ENCODE measurements at regions of chr2 and their contacts with region 1.

Region 1: DNA sequence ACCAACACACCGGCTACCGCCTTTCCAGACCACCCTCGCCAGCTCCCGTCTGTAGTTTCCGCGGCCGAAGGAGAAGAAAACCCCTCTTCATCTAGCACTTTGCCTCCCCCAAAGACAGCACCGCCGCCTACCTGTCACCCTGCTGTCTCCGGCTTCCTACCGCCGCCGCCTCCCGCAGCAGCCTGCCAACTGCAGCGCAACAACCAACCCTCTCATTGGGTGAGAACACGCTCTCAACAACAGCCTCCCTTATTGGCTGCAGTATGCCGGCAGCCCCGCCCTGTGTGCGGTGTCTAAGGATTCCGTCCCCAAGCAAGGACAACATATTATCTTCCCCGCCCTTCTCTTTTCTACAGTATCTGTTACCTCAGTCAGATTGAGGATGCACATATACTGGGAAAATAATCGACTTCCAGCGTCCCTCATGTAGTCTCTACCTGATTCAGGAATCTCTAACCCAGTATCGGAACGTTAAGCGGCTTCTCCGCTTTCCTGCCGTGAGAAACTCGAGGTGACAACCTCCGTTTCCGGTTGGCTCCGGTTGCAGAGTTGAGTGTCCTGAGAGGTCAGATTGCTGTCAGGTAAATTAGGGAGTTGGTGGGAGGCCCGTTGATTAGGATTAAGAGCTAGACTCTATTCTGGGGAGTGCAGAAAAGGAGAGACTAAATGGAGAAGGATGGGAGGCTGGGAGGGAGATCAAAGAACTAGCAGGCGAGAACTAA is at the starts of genes HYCC2 and NDUFB3:
- DNase-seq: peak; percentile 98
- ATAC-seq: peak; percentile 97
- H3K4me3 ChIP-seq: peak within 1 kb of the TSS; percentile 61 to 92 (median 86)
- H3K4me3 Mint-ChIP-seq: peak within 1 kb of the TSS; percentile 91
- H3K27ac ChIP-seq: peak within 1 kb of the TSS; percentile 58 to 91
- H3K27ac Mint-ChIP-seq: peak within 1 kb of the TSS; percentile 98
- H3K4me1 ChIP-seq: peaks cover 18 to 27% of the 10 kb centered on the region in 2 donors
- H3K4me1 Mint-ChIP-seq: peaks cover 39% of the 10 kb centered on the region
- H3K27me3 ChIP-seq: no peaks in the 10 kb centered on the region
- H3K27me3 Mint-ChIP-seq: no peaks in the 10 kb centered on the region
- CTCF ChIP-seq: peak; percentile 40
- total RNA-seq, gene HYCC2: 30.1 and 32.4 TPM in 2 replicates
- total RNA-seq, gene NDUFB3: 35.1 and 44.7 TPM in 2 replicates

Region 2: DNA sequence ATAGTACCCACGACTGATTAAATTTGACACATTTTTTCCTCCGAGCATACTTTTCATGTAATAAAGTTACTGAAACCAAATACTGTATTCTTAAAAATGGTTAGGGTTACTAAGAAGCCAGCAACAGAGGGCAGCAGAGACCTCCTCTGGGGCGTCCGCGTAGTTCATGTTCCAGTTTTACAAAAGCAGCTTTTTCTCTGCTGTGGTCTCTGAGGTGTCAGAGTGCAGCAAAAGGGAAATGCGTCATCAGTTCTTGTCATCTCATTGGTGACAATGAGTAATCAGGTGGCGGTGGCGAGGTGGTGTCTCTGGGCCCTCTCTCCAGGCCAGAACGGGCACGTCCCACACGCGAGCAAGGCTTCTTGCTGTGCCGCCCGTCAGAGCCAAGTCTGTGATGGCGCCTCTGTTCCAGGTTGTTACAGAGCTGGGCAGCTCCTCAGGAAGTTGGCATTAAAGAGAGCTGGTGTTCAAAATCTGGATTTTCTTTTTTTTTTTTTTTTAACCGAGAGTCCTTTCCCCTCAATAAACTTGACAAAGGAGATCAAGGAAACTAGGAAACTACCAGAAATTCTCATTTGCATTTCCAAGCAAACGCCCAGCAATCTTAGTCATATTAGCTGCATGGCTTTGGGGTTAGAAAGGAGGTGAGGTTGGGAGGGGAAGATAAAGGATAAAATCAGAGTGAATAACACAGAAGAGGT is 358.5 kb before region 1 on chr2:
- CTCF ChIA-PET with region 1: interaction called, 22 read pairs
- POLR2A ChIA-PET with region 1: no interaction called
- intact Hi-C with region 1: no loop called
- DNase-seq: peak; percentile 91
- ATAC-seq: peak; percentile 99
- H3K4me3 ChIP-seq: peak overlapping the region in 4 of 5 experiments; percentile 5 to 52 (median 16)
- H3K4me3 Mint-ChIP-seq: peak overlapping the region; percentile 83
- H3K27ac ChIP-seq: peak overlapping the region; percentile 82 to 93
- H3K27ac Mint-ChIP-seq: peak overlapping the region; percentile 98
- H3K4me1 ChIP-seq: peaks cover 5 to 6% of the 10 kb centered on the region in 2 donors
- H3K4me1 Mint-ChIP-seq: peaks cover 15% of the 10 kb centered on the region
- H3K27me3 ChIP-seq: no peaks in the 10 kb centered on the region
- H3K27me3 Mint-ChIP-seq: peaks cover 10% of the 10 kb centered on the region
- CTCF ChIP-seq: peak; percentile 83

Region 3: GRCh38 chr2:200888704-200889625 is 182.7 kb before region 1 on chr2 and contains the starts of genes NIF3L1 and PPIL3:
- CTCF ChIA-PET with region 1: interaction called, 11 read pairs
- POLR2A ChIA-PET with region 1: interaction called, 4 read pairs
- intact Hi-C with region 1: loop called (anchors 1 kb)
- DNase-seq: peak; percentile 98
- ATAC-seq: peak; percentile 81
- H3K4me3 ChIP-seq: peak within 1 kb of the TSS; percentile 76 to 99 (median 87)
- H3K4me3 Mint-ChIP-seq: peak within 1 kb of the TSS; percentile 95
- H3K27ac ChIP-seq: peak within 1 kb of the TSS; percentile 90 to 93
- H3K27ac Mint-ChIP-seq: peak within 1 kb of the TSS; percentile 98
- H3K4me1 ChIP-seq: peaks cover 15 to 28% of the 10 kb centered on the region in 2 donors
- H3K4me1 Mint-ChIP-seq: peaks cover 43% of the 10 kb centered on the region
- H3K27me3 ChIP-seq: no peaks in the 10 kb centered on the region
- H3K27me3 Mint-ChIP-seq: no peaks in the 10 kb centered on the region
- CTCF ChIP-seq: no peak
- total RNA-seq, gene NIF3L1: 26.7 and 32.9 TPM in 2 replicates
- total RNA-seq, gene PPIL3: 55.5 and 57.9 TPM in 2 replicates

Region 4: DNA sequence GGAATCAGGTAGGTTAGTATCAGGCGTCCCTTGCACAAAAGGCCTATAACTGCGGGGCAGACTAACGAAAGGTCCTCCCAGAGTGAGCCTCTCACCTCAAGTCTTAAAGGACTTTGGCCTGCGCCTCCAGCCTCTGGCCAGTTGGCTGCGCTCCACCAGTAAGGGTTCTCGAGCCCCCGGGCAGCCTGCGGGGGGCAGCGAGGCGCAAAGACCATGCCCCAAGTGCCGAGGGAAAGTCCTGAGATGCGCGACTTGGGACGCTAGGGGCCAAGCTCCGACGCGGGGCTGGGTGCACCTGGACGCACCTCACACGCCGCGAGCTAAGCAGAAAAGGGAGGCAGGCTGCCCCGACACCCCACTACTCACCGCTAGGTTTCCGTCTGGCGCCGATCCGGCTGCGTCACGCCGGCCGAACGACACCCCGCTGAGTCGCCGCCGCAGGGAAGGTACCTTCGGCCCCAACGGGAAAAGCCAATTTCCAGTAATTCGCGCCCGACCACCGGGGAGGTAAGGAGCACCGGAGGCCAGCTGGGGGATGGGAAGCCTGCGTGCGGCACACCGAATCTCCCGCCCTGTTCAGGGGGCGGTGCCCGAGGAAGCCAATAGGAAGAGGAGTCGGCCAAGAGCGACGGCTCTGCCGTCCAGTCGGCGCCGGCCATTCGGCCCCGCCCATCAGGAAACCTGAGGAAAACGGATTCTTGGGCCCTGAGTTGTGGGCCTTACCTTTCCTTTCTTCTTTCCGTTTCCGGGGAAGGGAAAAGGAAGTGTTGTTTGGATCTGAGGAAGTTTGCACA is 108.3 kb before region 1 on chr2 and contains the start of gene ORC2:
- CTCF ChIA-PET with region 1: interaction called, 50 read pairs
- POLR2A ChIA-PET with region 1: no interaction called
- intact Hi-C with region 1: loop called (anchors 1 kb)
- DNase-seq: peak; percentile 97
- ATAC-seq: peak; percentile 92
- H3K4me3 ChIP-seq: peak within 1 kb of the TSS; percentile 77 to 97 (median 90)
- H3K4me3 Mint-ChIP-seq: peak within 1 kb of the TSS; percentile 92
- H3K27ac ChIP-seq: peak within 1 kb of the TSS; percentile 90 to 92
- H3K27ac Mint-ChIP-seq: peak within 1 kb of the TSS; percentile 98
- H3K4me1 ChIP-seq: peaks cover 28 to 30% of the 10 kb centered on the region in 2 donors
- H3K4me1 Mint-ChIP-seq: peaks cover 53% of the 10 kb centered on the region
- H3K27me3 ChIP-seq: no peaks in the 10 kb centered on the region
- H3K27me3 Mint-ChIP-seq: no peaks in the 10 kb centered on the region
- CTCF ChIP-seq: peak; percentile 77
- total RNA-seq, gene ORC2: 50.6 and 63.6 TPM in 2 replicates

Region 5: GRCh38 chr2:201118121-201118960 is 46.7 kb after region 1 on chr2:
- CTCF ChIA-PET with region 1: interaction called, 41 read pairs
- POLR2A ChIA-PET with region 1: interaction called, 3 read pairs
- intact Hi-C with region 1: loop called (anchors 1 kb)
- DNase-seq: peak; percentile 95
- ATAC-seq: peak; percentile 64
- H3K4me3 ChIP-seq: peak overlapping the region; percentile 66 to 100 (median 97)
- H3K4me3 Mint-ChIP-seq: peak overlapping the region; percentile 98
- H3K27ac ChIP-seq: peak overlapping the region; percentile 94 to 96
- H3K27ac Mint-ChIP-seq: peak overlapping the region; percentile 98
- H3K4me1 ChIP-seq: peaks cover 63 to 72% of the 10 kb centered on the region in 2 donors
- H3K4me1 Mint-ChIP-seq: peaks cover 72% of the 10 kb centered on the region
- H3K27me3 ChIP-seq: no peaks in the 10 kb centered on the region
- H3K27me3 Mint-ChIP-seq: no peaks in the 10 kb centered on the region
- CTCF ChIP-seq: peak; percentile 55

Region 6: DNA sequence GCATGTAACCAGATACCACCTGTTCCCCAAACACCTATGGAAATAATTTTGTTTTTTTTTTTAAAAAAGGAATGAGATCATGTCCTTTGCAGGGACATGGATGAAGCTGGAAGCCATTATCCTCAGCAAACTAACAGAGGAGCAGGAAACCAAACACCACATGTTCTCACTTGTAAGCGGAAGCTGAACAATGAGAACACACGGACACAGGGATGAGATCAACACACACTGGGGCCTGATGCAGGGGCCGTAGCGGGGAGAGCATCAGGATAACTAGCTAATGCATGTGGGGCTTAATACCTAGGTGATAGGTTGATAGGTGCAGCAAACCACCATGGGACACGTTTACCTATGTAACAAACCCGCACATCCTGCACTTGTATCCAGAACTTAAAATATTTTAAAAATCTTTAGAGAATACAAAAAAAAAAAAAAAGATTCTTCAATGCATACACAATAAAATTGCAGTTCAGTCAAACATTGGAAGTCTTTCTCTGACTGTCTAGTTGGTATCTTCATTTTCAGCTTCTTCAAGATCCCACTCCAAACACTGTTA is 99.7 kb after region 1 on chr2:
- CTCF ChIA-PET with region 1: interaction called, 46 read pairs
- POLR2A ChIA-PET with region 1: no interaction called
- intact Hi-C with region 1: no loop called
- DNase-seq: no peak
- ATAC-seq: no peak
- H3K4me3 ChIP-seq: no peak overlapping the region
- H3K4me3 Mint-ChIP-seq: no peak overlapping the region
- H3K27ac ChIP-seq: no peak overlapping the region
- H3K27ac Mint-ChIP-seq: no peak overlapping the region
- H3K4me1 ChIP-seq: peaks cover 12 to 20% of the 10 kb centered on the region in 2 donors
- H3K4me1 Mint-ChIP-seq: peaks cover 27% of the 10 kb centered on the region
- H3K27me3 ChIP-seq: no peaks in the 10 kb centered on the region
- H3K27me3 Mint-ChIP-seq: no peaks in the 10 kb centered on the region
- CTCF ChIP-seq: no peak

Region 7: DNA sequence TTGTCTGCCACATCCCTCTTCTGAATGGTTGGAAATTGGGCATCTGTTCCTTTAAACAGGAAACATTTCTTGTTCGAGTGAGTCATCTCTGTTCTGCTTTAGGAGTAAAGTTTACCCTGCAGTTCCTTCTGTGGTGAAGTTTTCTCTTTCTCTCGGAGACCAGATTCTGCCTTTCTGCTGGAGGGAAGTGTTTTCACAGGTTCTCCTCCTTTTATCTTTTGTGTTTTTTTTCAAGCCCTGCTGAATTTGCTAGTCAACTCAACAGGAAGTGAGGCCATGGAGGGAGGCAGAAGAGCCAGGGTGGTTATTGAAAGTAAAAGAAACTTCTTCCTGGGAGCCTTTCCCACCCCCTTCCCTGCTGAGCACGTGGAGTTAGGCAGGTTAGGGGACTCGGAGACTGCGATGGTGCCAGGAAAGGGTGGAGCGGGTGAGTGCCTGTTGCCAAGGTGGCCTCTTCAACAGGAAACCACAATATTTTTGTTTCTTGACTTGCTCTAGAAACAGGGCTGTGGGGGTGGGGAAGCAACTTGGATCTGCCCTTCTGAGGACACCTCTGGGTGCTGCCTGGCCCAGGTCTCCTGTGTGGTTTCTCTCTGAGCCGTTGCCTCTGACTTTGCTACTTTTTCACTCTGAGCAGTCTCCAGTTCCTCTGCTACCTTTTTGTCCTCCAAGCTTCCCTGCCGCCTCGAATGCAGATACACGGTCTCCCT is 186.5 kb after region 1 on chr2:
- CTCF ChIA-PET with region 1: interaction called, 3 read pairs
- POLR2A ChIA-PET with region 1: no interaction called
- intact Hi-C with region 1: loop called (anchors 2 kb)
- DNase-seq: peak; percentile 94
- ATAC-seq: peak; percentile 67
- H3K4me3 ChIP-seq: peak overlapping the region; percentile 39 to 90 (median 58)
- H3K4me3 Mint-ChIP-seq: peak overlapping the region; percentile 87
- H3K27ac ChIP-seq: peak overlapping the region; percentile 97 to 98
- H3K27ac Mint-ChIP-seq: peak overlapping the region; percentile 99
- H3K4me1 ChIP-seq: peaks cover 58 to 84% of the 10 kb centered on the region in 2 donors
- H3K4me1 Mint-ChIP-seq: peaks cover 73% of the 10 kb centered on the region
- H3K27me3 ChIP-seq: no peaks in the 10 kb centered on the region
- H3K27me3 Mint-ChIP-seq: no peaks in the 10 kb centered on the region
- CTCF ChIP-seq: no peak

Measured in B cell (primary cell).